MCF 10A (cell line): ENCODE measurements at regions of chr17 and their contacts with region 1.

Region 1: GRCh38 chr17:75034236-75034908 is 12.4 kb downstream of the ATP5PD start:
- DNase-seq: peak; percentile 96
- H3K4me3 Mint-ChIP-seq: peak overlapping the region; percentile 81
- H3K27ac Mint-ChIP-seq: peak overlapping the region; percentile 94
- H3K4me1 Mint-ChIP-seq: peaks cover 12% of the 10 kb centered on the region
- H3K27me3 Mint-ChIP-seq: no peaks in the 10 kb centered on the region
- CTCF ChIP-seq: no peak

Region 2: GRCh38 chr17:74904687-74905409 is 129.5 kb before region 1 on chr17:
- CTCF ChIA-PET with region 1: no interaction called
- POLR2A ChIA-PET with region 1: no interaction called
- intact Hi-C with region 1: no loop called
- DNase-seq: no peak
- H3K4me3 Mint-ChIP-seq: no peak overlapping the region
- H3K27ac Mint-ChIP-seq: no peak overlapping the region
- H3K4me1 Mint-ChIP-seq: no peaks in the 10 kb centered on the region
- H3K27me3 Mint-ChIP-seq: no peaks in the 10 kb centered on the region
- CTCF ChIP-seq: no peak

Region 3: DNA sequence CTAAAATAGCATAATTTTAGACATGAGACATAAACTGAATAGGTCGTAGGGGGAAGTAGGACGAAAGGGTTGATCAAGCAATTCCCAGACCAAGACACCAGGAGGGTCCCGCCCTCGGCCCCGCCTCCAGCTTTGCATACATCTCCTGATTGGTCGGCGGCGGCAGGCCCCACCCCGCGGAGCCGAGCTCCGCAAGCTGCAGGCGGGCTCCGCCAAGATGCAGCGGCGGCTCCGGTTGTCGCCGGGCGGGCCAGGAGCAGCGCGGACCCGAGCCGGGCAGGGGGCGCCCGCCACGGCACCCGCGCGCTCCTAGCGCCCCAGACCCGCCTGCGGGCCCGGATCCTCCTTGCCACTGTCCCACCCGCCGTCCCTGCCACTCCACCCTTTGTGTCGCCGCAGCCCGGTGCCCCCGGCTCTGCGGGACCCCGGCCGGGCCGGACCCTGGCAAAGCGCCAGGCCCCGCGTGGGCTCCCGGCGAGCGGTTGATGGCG is 46.9 kb before region 1 on chr17 and contains the start of gene CDR2L:
- CTCF ChIA-PET with region 1: no interaction called
- POLR2A ChIA-PET with region 1: interaction called, 15 read pairs
- intact Hi-C with region 1: loop called (anchors 2 kb)
- DNase-seq: peak; percentile 90
- H3K4me3 Mint-ChIP-seq: peak within 1 kb of the TSS; percentile 78
- H3K27ac Mint-ChIP-seq: peak within 1 kb of the TSS; percentile 16
- H3K4me1 Mint-ChIP-seq: peaks cover 14% of the 10 kb centered on the region
- H3K27me3 Mint-ChIP-seq: no peaks in the 10 kb centered on the region
- CTCF ChIP-seq: no peak
- total RNA-seq, gene CDR2L: 3.4 and 4.1 TPM in 2 replicates

Region 4: GRCh38 chr17:74994476-74994875 is 39.9 kb before region 1 on chr17:
- CTCF ChIA-PET with region 1: no interaction called
- POLR2A ChIA-PET with region 1: interaction called, 15 read pairs
- intact Hi-C with region 1: loop called (anchors 2 kb)
- DNase-seq: peak; percentile 43
- H3K4me3 Mint-ChIP-seq: no peak overlapping the region
- H3K27ac Mint-ChIP-seq: no peak overlapping the region
- H3K4me1 Mint-ChIP-seq: peaks cover 25% of the 10 kb centered on the region
- H3K27me3 Mint-ChIP-seq: no peaks in the 10 kb centered on the region
- CTCF ChIP-seq: no peak